Uterus (tissue), 4 donors: ENCODE measurements at regions of chr19 and their contacts with region 1.

Region 1: GRCh38 chr19:3403489-3404323 is 37.3 kb downstream of the NFIC start:
- DNase-seq: peak; percentile 93 to 95
- H3K4me3 ChIP-seq: peak overlapping the region; percentile 41 to 67
- H3K27ac ChIP-seq: peak overlapping the region; percentile 98 to 100
- H3K4me1 ChIP-seq: peaks cover 0 to 3% of the 10 kb centered on the region in 2 donors
- H3K27me3 ChIP-seq: no peaks in the 10 kb centered on the region
- CTCF ChIP-seq: no peak
- POLR2A ChIP-seq: peak in 1 of 2 donors; percentile 14

Region 2: DNA sequence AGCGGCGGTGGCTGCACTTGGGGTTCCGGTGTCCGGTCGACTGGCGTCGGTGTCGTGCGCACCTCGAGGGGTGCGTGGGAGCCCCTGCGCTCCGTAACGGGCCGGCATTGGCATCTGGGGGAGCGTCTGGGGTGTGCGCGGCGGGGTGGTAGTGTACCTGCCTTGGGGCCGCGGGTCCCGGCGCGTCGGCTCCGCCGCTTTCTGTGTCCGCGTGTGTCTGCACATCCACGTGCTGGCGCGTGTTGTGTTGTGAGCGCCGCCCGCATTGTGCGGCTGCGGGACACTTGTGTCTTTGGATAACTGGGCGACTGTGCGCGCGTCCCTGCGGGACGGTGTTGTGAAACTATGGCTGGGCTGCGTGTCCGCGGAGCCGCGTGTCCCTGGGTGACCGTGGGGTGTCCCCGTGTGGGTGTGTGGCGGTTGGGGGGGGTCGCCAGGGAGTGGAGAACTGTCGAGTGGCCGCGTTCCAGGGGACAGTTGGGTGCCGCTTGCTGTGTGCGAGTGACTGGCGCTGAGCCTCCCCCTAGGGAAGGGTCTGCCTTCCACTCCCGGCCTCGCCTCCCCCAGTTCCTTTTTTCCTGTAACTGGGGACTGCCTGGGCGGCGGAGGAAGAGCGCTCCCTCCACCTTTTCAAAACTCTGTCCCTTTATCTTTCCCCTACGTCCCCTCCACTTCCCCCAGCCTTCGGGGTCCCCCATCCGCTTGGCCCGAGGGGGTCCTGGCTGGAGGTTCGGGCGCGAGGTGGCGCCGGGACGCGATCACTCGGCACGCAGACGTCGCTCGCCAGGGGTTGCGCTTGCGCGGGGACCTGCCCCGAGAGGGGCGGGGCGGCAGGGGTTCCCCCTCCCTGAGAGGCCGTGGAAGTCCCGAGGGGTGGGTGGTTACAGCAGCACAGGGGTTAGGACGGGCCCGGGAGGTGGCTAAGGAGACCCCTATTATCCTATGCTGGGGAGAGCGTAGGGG is 43.0 kb before region 1 on chr19:
- intact Hi-C with region 1: loop called (anchors 2 kb)
- DNase-seq: peak in 1 of 2 donors; percentile 72
- H3K4me3 ChIP-seq: peak overlapping the region; percentile 90 to 93
- H3K27ac ChIP-seq: peak overlapping the region; percentile 98 to 100
- H3K4me1 ChIP-seq: peaks cover 0 to 27% of the 10 kb centered on the region in 2 donors
- H3K27me3 ChIP-seq: no peaks in the 10 kb centered on the region
- CTCF ChIP-seq: peak; percentile 23 to 39 (median 36)
- POLR2A ChIP-seq: peak; percentile 64 to 71